PC-3 (cell line): ENCODE measurements at regions of chr9 and their contacts with region 1.

Region 1: GRCh38 chr9:132006677-132007370 is 72.8 kb downstream of the MED27 start:
- DNase-seq: no peak
- ATAC-seq: no peak
- H3K4me3 ChIP-seq: no peak overlapping the region
- H3K27ac ChIP-seq: no peak overlapping the region
- H3K4me1 ChIP-seq: peaks cover 37% of the 10 kb centered on the region
- H3K27me3 ChIP-seq: no peaks in the 10 kb centered on the region
- CTCF ChIP-seq: no peak

Region 2: DNA sequence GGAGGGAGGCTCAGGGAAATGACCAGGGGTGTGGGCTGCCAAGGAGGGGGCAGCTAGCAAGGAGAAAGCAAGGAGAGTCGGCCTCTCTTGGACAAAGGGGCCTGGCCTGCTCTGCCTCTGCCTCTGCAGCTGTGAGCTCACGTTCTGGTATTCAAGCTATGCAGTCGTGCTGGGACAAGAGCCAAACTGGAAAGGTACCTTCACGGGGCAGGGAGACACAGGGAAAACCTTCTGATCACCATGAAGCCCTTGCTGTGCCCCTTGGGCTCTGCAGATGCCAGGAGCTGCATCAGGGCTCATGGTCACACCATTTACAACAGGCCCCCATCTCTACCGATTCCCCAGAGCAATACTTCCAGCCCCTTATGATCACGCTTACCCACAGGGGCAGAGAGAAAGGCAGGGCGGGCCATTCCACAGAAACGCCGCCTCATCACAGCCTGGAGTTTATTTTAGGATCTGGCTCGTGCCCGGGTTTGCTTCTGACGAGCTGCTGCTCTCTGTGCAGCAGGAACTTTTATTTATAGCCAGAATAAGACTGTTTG is 398.3 kb before region 1 on chr9:
- CTCF ChIA-PET with region 1: no interaction called
- POLR2A ChIA-PET with region 1: no interaction called
- intact Hi-C with region 1: no loop called
- DNase-seq: peak; percentile 76
- ATAC-seq: peak; percentile 94
- H3K4me3 ChIP-seq: peak overlapping the region; percentile 5; the same call in 1 of the 2 replicates
- H3K27ac ChIP-seq: peak overlapping the region; percentile 12; the same call in 1 of the 2 replicates
- H3K4me1 ChIP-seq: peaks cover 16% of the 10 kb centered on the region
- H3K27me3 ChIP-seq: no peaks in the 10 kb centered on the region
- CTCF ChIP-seq: no peak

Region 3: DNA sequence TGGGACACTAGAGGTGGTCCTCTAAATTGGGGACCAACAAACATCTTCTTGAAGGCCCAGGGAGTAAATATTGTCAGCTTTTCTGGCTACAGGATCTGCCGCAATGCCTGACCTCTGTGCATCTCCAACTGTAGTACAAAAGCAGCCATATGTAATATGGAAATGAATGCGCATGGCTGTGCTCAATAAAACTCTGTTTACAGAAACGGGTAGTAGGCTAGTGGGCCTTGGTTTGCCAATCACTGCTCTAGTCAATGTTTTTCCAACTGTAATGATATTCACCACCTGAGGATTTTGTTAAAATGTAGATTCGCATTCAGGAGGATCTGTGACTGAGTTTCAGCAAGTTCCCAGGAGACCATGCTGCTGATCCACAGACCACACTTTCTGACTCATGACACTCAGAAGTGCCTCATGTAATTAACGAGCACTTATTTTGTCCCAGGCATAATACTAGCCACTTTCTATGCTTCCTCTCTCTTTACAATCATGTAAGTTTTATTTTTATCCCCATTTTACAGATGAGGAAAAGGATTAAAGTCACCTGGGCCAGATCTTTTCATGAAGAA is 24.1 kb before region 1 on chr9:
- CTCF ChIA-PET with region 1: no interaction called
- POLR2A ChIA-PET with region 1: no interaction called
- intact Hi-C with region 1: loop called (anchors 2 kb)
- DNase-seq: no peak
- ATAC-seq: no peak
- H3K4me3 ChIP-seq: no peak overlapping the region
- H3K27ac ChIP-seq: no peak overlapping the region
- H3K4me1 ChIP-seq: peaks cover 43% of the 10 kb centered on the region
- H3K27me3 ChIP-seq: no peaks in the 10 kb centered on the region
- CTCF ChIP-seq: no peak

Region 4: GRCh38 chr9:132079391-132080091 is 72.7 kb after region 1 on chr9 and contains the start of gene MED27:
- CTCF ChIA-PET with region 1: no interaction called
- POLR2A ChIA-PET with region 1: no interaction called
- intact Hi-C with region 1: loop called (anchors 5 kb)
- DNase-seq: peak; percentile 90
- ATAC-seq: peak; percentile 85
- H3K4me3 ChIP-seq: peak within 1 kb of the TSS; percentile 98
- H3K27ac ChIP-seq: peak within 1 kb of the TSS; percentile 39
- H3K4me1 ChIP-seq: peaks cover 26% of the 10 kb centered on the region
- H3K27me3 ChIP-seq: no peaks in the 10 kb centered on the region
- CTCF ChIP-seq: no peak
- total RNA-seq, gene MED27: 22.7 and 38.4 TPM in 2 replicates

Region 5: GRCh38 chr9:132094314-132094791 is 87.5 kb after region 1 on chr9:
- CTCF ChIA-PET with region 1: no interaction called
- POLR2A ChIA-PET with region 1: no interaction called
- intact Hi-C with region 1: loop called (anchors 5 kb)
- DNase-seq: peak; percentile 79
- ATAC-seq: peak; percentile 95
- H3K4me3 ChIP-seq: no peak overlapping the region
- H3K27ac ChIP-seq: peak overlapping the region; percentile 96
- H3K4me1 ChIP-seq: peaks cover 26% of the 10 kb centered on the region
- H3K27me3 ChIP-seq: no peaks in the 10 kb centered on the region
- CTCF ChIP-seq: no peak